B cell (primary cell): ENCODE measurements at regions of chr4 and their contacts with region 1.

Region 1: GRCh38 chr4:47562297-47562696 is 77.2 kb downstream of the ATP10D start:
- DNase-seq: no peak
- ATAC-seq: no peak
- H3K4me3 ChIP-seq: no peak overlapping the region
- H3K4me3 Mint-ChIP-seq: no peak overlapping the region
- H3K27ac ChIP-seq: no peak overlapping the region
- H3K27ac Mint-ChIP-seq: no peak overlapping the region
- H3K4me1 ChIP-seq: peaks cover 0 to 5% of the 10 kb centered on the region in 2 donors
- H3K4me1 Mint-ChIP-seq: peaks cover 11% of the 10 kb centered on the region
- H3K27me3 ChIP-seq: no peaks in the 10 kb centered on the region
- H3K27me3 Mint-ChIP-seq: no peaks in the 10 kb centered on the region
- CTCF ChIP-seq: no peak

Region 2: GRCh38 chr4:46931981-46932380 is 630.3 kb before region 1 on chr4:
- CTCF ChIA-PET with region 1: no interaction called
- POLR2A ChIA-PET with region 1: no interaction called
- intact Hi-C with region 1: loop called (anchors 10 kb)
- DNase-seq: no peak
- ATAC-seq: no peak
- H3K4me3 ChIP-seq: no peak overlapping the region
- H3K4me3 Mint-ChIP-seq: no peak overlapping the region
- H3K27ac ChIP-seq: no peak overlapping the region
- H3K27ac Mint-ChIP-seq: no peak overlapping the region
- H3K4me1 ChIP-seq: no peaks in the 10 kb centered on the region
- H3K4me1 Mint-ChIP-seq: no peaks in the 10 kb centered on the region
- H3K27me3 ChIP-seq: no peaks in the 10 kb centered on the region
- H3K27me3 Mint-ChIP-seq: peaks cover 4% of the 10 kb centered on the region
- CTCF ChIP-seq: no peak

Region 3: DNA sequence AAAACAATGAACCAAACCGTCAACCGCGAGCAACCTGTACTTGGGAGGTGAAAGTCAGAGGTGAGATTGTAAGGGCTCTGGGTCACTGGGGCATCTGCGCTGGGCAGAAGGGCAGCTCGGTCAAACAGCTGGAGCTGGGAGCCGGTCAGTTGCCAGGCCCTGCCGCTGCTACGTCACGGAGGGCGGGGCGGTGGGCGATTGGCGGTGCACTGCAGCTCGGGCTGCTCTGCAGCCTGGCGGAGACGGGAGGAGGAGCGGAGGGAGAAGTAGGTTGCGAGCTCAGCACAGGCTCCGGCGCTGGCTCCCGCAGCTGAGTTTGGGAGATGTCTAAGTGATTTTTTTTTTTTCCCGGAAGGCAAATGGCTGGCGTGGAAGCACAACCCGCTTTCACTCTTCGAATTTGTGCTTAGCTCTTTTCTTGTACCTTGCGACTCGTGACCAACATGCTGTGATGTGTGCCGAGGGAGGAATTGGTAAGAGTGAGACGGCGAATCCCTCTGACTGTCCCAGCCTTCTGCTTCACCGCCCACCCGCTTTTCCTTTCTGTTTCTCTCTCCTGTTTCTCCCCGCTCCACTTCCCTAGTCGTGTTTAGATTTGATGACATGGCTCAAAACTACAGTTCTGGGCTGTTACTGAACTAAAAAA is 77.1 kb before region 1 on chr4 and contains the start of gene ATP10D:
- CTCF ChIA-PET with region 1: interaction called, 22 read pairs
- POLR2A ChIA-PET with region 1: no interaction called
- intact Hi-C with region 1: loop called (anchors 1 kb)
- DNase-seq: peak; percentile 89
- ATAC-seq: peak; percentile 95
- H3K4me3 ChIP-seq: peak within 1 kb of the TSS; percentile 79 to 97 (median 90)
- H3K4me3 Mint-ChIP-seq: peak within 1 kb of the TSS; percentile 97
- H3K27ac ChIP-seq: peak within 1 kb of the TSS; percentile 93
- H3K27ac Mint-ChIP-seq: peak within 1 kb of the TSS; percentile 96
- H3K4me1 ChIP-seq: peaks cover 32 to 52% of the 10 kb centered on the region in 2 donors
- H3K4me1 Mint-ChIP-seq: peaks cover 57% of the 10 kb centered on the region
- H3K27me3 ChIP-seq: no peaks in the 10 kb centered on the region
- H3K27me3 Mint-ChIP-seq: no peaks in the 10 kb centered on the region
- CTCF ChIP-seq: no peak
- total RNA-seq, gene ATP10D: 36.2 and 41.8 TPM in 2 replicates

Region 4: DNA sequence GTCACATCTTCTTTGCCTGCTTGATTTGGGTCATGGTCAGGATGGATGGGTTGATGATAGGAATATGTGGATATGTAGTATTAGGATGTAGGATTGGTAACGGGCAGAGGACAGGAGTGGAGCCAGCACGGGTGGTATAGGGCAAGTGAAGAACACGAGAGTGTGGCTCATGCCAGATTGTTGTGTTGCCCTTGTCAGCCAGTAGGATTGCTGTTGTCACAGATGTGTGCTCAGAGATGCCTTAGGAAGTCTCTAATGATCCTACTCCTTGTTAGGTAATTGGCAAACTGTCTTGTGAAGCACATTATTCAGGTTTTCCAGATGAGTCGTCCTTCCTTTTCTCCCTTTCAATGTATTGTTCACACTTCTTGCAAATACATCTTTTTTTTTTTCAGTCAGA is 71.7 kb before region 1 on chr4:
- CTCF ChIA-PET with region 1: interaction called, 22 read pairs
- POLR2A ChIA-PET with region 1: no interaction called
- intact Hi-C with region 1: loop called (anchors 1 kb)
- DNase-seq: peak; percentile 57
- ATAC-seq: peak; percentile 87
- H3K4me3 ChIP-seq: no peak overlapping the region
- H3K4me3 Mint-ChIP-seq: peak overlapping the region; percentile 71
- H3K27ac ChIP-seq: peak overlapping the region in 1 of 2 donors; percentile 73
- H3K27ac Mint-ChIP-seq: peak overlapping the region; percentile 82
- H3K4me1 ChIP-seq: peaks cover 26 to 66% of the 10 kb centered on the region in 2 donors
- H3K4me1 Mint-ChIP-seq: peaks cover 66% of the 10 kb centered on the region
- H3K27me3 ChIP-seq: no peaks in the 10 kb centered on the region
- H3K27me3 Mint-ChIP-seq: no peaks in the 10 kb centered on the region
- CTCF ChIP-seq: peak; percentile 72

Region 5: GRCh38 chr4:47510506-47511143 is 51.7 kb before region 1 on chr4:
- CTCF ChIA-PET with region 1: interaction called, 5 read pairs
- POLR2A ChIA-PET with region 1: no interaction called
- intact Hi-C with region 1: loop called (anchors 5 kb)
- DNase-seq: peak; percentile 66
- ATAC-seq: peak; percentile 85
- H3K4me3 ChIP-seq: peak overlapping the region in 1 of 5 experiments; percentile 27
- H3K4me3 Mint-ChIP-seq: peak overlapping the region; percentile 64
- H3K27ac ChIP-seq: peak overlapping the region; percentile 52 to 66
- H3K27ac Mint-ChIP-seq: peak overlapping the region; percentile 77
- H3K4me1 ChIP-seq: peaks cover 40 to 63% of the 10 kb centered on the region in 2 donors
- H3K4me1 Mint-ChIP-seq: peaks cover 64% of the 10 kb centered on the region
- H3K27me3 ChIP-seq: no peaks in the 10 kb centered on the region
- H3K27me3 Mint-ChIP-seq: no peaks in the 10 kb centered on the region
- CTCF ChIP-seq: peak; percentile 73

Region 6: DNA sequence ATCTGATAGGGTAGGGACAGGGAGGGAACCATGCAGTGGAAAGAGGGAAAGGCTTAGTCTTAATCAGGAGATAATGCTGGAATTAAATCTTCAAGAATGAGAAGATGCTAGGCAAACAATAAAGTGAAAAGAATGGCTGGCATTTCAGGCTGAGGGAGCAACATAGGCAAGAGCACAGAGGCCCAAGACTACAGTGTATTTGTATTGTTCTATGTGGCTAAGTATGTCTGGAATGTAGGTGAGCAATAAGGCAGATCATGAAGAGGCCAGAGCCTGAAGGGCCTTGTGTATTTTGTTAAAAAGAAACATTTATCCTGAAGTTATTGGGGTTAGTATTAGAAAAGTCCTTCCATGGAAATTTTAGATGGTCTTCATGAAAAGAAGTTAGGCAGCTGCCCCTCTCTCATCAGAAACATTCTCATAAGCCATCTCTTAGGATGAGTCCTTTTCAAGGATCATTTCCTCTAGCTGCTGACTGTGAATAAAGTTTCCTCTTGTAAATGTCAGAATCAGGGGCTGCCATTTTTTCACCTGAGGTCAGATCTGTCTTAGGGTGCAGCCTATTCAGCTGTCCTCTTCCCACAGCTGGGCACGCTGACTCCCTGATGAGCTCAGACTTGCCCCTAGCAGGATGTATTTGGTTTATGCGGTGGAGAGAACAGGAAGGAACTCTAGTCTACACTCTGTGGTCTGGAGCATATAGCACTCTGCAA is 30.9 kb before region 1 on chr4:
- CTCF ChIA-PET with region 1: interaction called, 10 read pairs
- POLR2A ChIA-PET with region 1: no interaction called
- intact Hi-C with region 1: no loop called
- DNase-seq: peak; percentile 54
- ATAC-seq: peak; percentile 96
- H3K4me3 ChIP-seq: peak overlapping the region in 1 of 5 experiments; percentile 17
- H3K4me3 Mint-ChIP-seq: peak overlapping the region; percentile 33
- H3K27ac ChIP-seq: peak overlapping the region in 1 of 2 donors; percentile 20
- H3K27ac Mint-ChIP-seq: peak overlapping the region; percentile 42
- H3K4me1 ChIP-seq: peaks cover 24 to 27% of the 10 kb centered on the region in 2 donors
- H3K4me1 Mint-ChIP-seq: peaks cover 37% of the 10 kb centered on the region
- H3K27me3 ChIP-seq: no peaks in the 10 kb centered on the region
- H3K27me3 Mint-ChIP-seq: no peaks in the 10 kb centered on the region
- CTCF ChIP-seq: no peak